ENCODE measurements at regions of chr5 and their contacts with region 1.

Region 1: GRCh38 chr5:95261437-95262175 is 23.3 kb downstream of the MCTP1 start:
- DNase-seq: no peak
- H3K4me3 ChIP-seq: no peak overlapping the region
- H3K27ac ChIP-seq: no peak overlapping the region
- H3K4me1 ChIP-seq: no peaks in the 10 kb centered on the region
- H3K27me3 ChIP-seq: no peaks in the 10 kb centered on the region
- CTCF ChIP-seq: peak in 3 of 6 experiments; percentile 5 to 28 (median 21)
- POLR2A ChIP-seq: no peak

Region 2: DNA sequence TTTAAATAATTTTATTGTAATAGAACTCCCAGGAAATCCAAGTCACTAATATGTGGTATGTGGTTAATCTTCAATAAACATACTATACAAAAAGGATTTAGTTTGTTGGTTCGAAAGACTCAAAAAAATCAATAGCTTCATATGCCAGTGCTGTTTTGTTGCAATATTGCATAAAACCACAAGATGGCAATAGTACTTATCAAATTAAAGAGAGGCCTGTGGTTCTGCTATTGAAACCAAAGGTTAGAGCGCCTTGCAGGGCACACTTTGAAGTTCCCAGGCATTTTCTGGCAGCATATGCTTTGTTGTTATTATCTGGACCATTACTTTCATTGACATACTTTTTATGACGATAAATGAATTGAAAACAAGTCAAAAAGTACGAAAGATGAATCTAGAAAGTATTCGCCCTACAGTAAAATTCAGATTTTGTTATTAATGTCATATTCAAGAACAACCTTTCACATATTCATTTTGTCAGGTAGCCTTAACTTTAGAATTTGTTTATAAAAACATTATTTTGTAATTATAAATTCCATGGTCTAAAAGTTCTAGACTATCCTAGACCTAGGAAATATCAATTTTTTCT is 293.0 kb before region 1 on chr5:
- intact Hi-C with region 1: loop called (anchors 10 kb)
- DNase-seq: no peak
- H3K4me3 ChIP-seq: no peak overlapping the region
- H3K27ac ChIP-seq: no peak overlapping the region
- H3K4me1 ChIP-seq: no peaks in the 10 kb centered on the region
- H3K27me3 ChIP-seq: no peaks in the 10 kb centered on the region
- CTCF ChIP-seq: peak in 5 of 6 experiments; percentile 60 to 78 (median 64)
- POLR2A ChIP-seq: no peak